Activated B cell treated with CpG ODN at 0.5 μM for 24 hours (primary cell): ENCODE measurements at regions of chr10 and their contacts with region 1.

Region 1: GRCh38 chr10:80472234-80473095 is 18.4 kb downstream of the TSPAN14 start:
- DNase-seq: no peak
- ATAC-seq: peak; percentile 88
- H3K4me3 Mint-ChIP-seq: peak overlapping the region; percentile 44
- H3K27ac Mint-ChIP-seq: peak overlapping the region; percentile 90
- H3K4me1 Mint-ChIP-seq: peaks cover 65% of the 10 kb centered on the region
- H3K27me3 Mint-ChIP-seq: no peaks in the 10 kb centered on the region
- CTCF ChIP-seq: no peak

Region 2: GRCh38 chr10:80344276-80344675 is 128.2 kb before region 1 on chr10:
- CTCF ChIA-PET with region 1: no interaction called
- POLR2A ChIA-PET with region 1: no interaction called
- intact Hi-C with region 1: no loop called
- DNase-seq: no peak
- ATAC-seq: no peak
- H3K4me3 Mint-ChIP-seq: no peak overlapping the region
- H3K27ac Mint-ChIP-seq: no peak overlapping the region
- H3K4me1 Mint-ChIP-seq: no peaks in the 10 kb centered on the region
- H3K27me3 Mint-ChIP-seq: no peaks in the 10 kb centered on the region
- CTCF ChIP-seq: no peak

Region 3: DNA sequence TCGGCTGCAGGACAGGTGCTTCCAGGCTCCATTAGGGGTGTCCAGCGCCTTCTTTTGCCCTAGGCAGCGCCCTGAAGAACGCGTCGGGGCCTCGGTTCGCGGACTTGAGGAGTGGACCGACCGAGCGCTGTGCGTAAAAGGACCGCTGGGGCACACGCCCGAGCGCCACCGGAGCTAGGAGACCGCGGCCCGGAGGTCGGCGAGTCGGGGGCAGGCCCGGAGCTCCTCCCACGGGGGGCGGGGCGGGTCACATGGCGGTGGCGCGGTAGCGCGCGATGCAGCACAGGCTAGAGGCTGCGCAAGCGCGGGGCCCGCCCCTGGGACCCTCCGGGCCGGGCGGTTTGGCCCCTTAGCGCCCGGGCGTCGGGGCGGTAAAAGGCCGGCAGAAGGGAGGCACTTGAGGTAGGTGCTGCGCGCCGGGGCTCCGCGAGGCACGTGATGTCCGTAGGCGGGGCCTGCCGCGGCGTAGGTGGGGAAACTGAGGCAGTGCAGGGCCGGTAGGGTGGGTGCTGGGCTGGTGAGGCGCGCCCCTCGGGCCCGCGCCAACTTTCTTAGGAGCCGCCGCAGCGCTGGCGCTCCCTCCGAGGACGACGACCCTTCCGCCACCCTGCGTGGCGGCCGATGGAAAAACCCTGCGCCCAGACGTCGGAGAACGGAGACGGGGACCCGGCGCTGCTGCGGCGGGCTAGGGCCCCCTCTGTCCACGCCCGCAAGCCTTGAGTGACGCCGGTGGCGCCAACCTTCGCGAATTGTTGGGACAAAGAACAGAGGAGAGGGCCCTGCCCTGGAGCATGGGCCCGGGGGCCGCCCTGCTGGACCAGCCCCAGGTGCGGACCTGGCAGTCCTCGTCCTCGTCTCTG is 64.0 kb before region 1 on chr10 and contains the start of gene PRXL2A:
- CTCF ChIA-PET with region 1: no interaction called
- POLR2A ChIA-PET with region 1: interaction called, 3 read pairs
- intact Hi-C with region 1: loop called (anchors 5 kb)
- DNase-seq: peak; percentile 87
- ATAC-seq: peak; percentile 97
- H3K4me3 Mint-ChIP-seq: peak within 1 kb of the TSS; percentile 91
- H3K27ac Mint-ChIP-seq: peak within 1 kb of the TSS; percentile 82
- H3K4me1 Mint-ChIP-seq: peaks cover 12% of the 10 kb centered on the region
- H3K27me3 Mint-ChIP-seq: peaks cover 2% of the 10 kb centered on the region
- CTCF ChIP-seq: no peak
- total RNA-seq, gene PRXL2A: 8.5 and 10.3 TPM in 2 replicates

Region 4: GRCh38 chr10:80453701-80454513 is 18.6 kb before region 1 on chr10 and contains the start of gene TSPAN14:
- CTCF ChIA-PET with region 1: interaction called, 4 read pairs
- POLR2A ChIA-PET with region 1: interaction called, 10 read pairs
- intact Hi-C with region 1: loop called (anchors 1 kb)
- DNase-seq: peak; percentile 73
- ATAC-seq: peak; percentile 77
- H3K4me3 Mint-ChIP-seq: peak within 1 kb of the TSS; percentile 95
- H3K27ac Mint-ChIP-seq: peak within 1 kb of the TSS; percentile 89
- H3K4me1 Mint-ChIP-seq: peaks cover 50% of the 10 kb centered on the region
- H3K27me3 Mint-ChIP-seq: no peaks in the 10 kb centered on the region
- CTCF ChIP-seq: no peak
- total RNA-seq, gene TSPAN14: 18.9 and 20.7 TPM in 2 replicates

Region 5: GRCh38 chr10:80459047-80459931 is 13.2 kb before region 1 on chr10:
- CTCF ChIA-PET with region 1: interaction called, 4 read pairs
- POLR2A ChIA-PET with region 1: interaction called, 10 read pairs
- intact Hi-C with region 1: loop called (anchors 1 kb)
- DNase-seq: peak; percentile 27
- ATAC-seq: peak; percentile 33
- H3K4me3 Mint-ChIP-seq: peak overlapping the region; percentile 51
- H3K27ac Mint-ChIP-seq: peak overlapping the region; percentile 76
- H3K4me1 Mint-ChIP-seq: peaks cover 92% of the 10 kb centered on the region
- H3K27me3 Mint-ChIP-seq: no peaks in the 10 kb centered on the region
- CTCF ChIP-seq: no peak

Region 6: DNA sequence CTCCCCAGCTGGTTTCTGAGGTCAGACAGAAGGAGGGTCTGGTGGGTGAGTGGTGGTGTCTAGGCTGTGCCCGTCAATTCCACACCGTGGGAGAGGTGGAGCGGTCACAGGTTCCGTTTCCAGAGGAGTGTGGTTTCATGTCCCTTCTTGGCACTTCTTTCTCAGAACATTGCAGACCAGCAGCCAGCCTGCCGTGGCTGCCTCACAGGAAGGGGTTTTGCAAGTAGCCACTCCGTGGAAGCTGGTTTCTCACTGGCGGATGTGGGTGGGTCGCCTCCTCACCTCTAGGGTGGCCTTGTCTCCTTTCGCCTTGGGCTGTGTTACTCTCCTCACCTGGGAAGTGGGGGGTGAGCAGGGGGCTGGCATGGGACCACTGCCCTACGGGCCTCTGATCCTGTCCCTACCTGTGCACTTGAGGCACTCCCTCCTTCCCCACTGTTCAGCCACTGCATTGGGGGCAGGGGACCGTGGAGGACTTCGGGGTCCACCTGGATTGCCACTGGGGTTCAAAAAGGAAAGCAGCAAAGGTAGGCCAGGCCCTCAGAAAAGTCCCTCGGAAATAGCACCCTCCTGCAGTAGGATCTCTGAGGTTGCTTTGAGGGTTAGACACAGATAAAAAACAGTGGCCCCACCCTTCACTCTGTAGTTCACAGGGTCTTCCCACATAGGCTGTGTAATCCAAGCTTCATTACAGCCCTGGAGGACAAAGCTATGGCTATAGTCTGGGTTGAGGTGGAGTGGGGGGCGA is 15.5 kb after region 1 on chr10:
- CTCF ChIA-PET with region 1: no interaction called
- POLR2A ChIA-PET with region 1: interaction called, 4 read pairs
- intact Hi-C with region 1: loop called (anchors 2 kb)
- DNase-seq: no peak
- ATAC-seq: no peak
- H3K4me3 Mint-ChIP-seq: no peak overlapping the region
- H3K27ac Mint-ChIP-seq: no peak overlapping the region
- H3K4me1 Mint-ChIP-seq: peaks cover 61% of the 10 kb centered on the region
- H3K27me3 Mint-ChIP-seq: no peaks in the 10 kb centered on the region
- CTCF ChIP-seq: no peak

Region 7: DNA sequence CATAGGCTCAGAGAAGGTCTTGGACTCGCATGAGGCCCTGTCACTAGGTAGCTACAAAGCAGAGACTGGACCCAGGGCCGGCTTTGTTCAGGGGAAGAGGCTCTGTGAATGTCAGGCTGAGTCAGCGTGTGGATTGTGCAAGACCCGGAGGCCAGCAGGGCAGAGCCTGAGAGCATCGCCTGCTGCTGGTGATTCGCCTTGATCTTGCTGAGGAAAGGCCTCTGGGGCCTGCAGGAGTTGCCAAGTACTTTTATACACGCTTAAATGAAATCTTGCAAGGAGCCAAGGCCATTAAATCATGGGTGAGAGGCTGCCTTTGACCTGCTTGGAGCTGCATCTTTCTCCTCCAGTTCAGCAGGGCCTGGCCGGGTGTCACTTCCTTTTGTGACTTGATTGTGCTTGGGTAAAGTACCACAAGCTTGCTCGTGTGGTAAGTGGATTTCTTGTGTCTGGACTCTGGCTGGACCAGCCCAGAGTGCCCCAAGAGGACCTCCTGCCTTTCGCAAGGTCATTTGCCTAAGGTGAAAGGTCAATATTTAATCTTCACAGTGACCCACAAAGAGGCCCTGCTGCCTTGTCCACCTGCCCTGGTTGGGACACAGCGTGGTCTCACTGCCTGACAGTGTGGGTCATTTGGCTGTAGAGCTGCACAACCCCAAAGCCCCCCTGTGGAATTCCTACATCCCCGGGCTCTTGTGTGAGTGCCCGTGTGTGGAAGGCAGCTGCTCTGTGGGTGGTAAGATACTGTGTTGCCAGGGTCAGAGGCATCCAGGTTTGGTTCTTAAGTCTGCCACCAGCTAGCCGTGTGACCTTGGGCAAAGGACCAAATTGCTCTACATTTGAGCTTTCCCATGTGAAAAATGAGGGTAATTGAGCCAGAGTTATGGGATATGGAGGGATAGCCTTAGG is 26.6 kb after region 1 on chr10:
- CTCF ChIA-PET with region 1: interaction called, 3 read pairs
- POLR2A ChIA-PET with region 1: interaction called, 13 read pairs
- intact Hi-C with region 1: loop called (anchors 1 kb)
- DNase-seq: no peak
- ATAC-seq: peak; percentile 23
- H3K4me3 Mint-ChIP-seq: no peak overlapping the region
- H3K27ac Mint-ChIP-seq: peak overlapping the region; percentile 85
- H3K4me1 Mint-ChIP-seq: peaks cover 81% of the 10 kb centered on the region
- H3K27me3 Mint-ChIP-seq: no peaks in the 10 kb centered on the region
- CTCF ChIP-seq: no peak

Region 8: GRCh38 chr10:80512031-80512526 is 39.6 kb after region 1 on chr10:
- CTCF ChIA-PET with region 1: no interaction called
- POLR2A ChIA-PET with region 1: interaction called, 12 read pairs
- intact Hi-C with region 1: no loop called
- DNase-seq: no peak
- ATAC-seq: no peak
- H3K4me3 Mint-ChIP-seq: no peak overlapping the region
- H3K27ac Mint-ChIP-seq: no peak overlapping the region
- H3K4me1 Mint-ChIP-seq: peaks cover 6% of the 10 kb centered on the region
- H3K27me3 Mint-ChIP-seq: no peaks in the 10 kb centered on the region
- CTCF ChIP-seq: no peak